Calu3 (cell line): ENCODE measurements at regions of chr5 and their contacts with region 1.

Region 1: GRCh38 chr5:117539692-117540091 is 965.1 kb upstream of the SEMA6A start:
- DNase-seq: no peak
- H3K4me3 Mint-ChIP-seq: peak overlapping the region; percentile 19
- H3K27ac Mint-ChIP-seq: peak overlapping the region; percentile 63
- H3K4me1 Mint-ChIP-seq: peaks cover 37% of the 10 kb centered on the region
- H3K27me3 Mint-ChIP-seq: no peaks in the 10 kb centered on the region
- CTCF ChIP-seq: no peak

Region 2: DNA sequence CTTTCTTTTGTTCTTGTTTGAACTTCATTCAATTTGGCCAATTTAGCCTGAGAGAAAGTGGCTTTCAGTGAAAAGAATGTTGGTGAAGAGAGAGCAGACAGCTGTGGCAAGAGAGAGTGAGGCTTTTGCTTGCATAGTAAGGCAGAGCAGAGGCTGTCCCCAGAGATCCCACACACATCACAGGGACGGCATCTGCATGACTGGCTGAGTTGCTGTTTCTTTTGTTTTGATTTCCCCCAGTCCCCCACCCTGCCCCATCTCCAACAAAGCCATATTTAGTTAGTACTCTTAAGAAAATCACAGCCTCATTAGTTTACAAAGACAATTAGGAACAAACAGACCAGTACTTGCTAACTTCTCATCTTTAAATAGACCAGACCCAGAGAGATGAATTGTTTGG is 601.2 kb before region 1 on chr5:
- CTCF ChIA-PET with region 1: no interaction called
- intact Hi-C with region 1: no loop called
- DNase-seq: no peak
- H3K4me3 Mint-ChIP-seq: no peak overlapping the region
- H3K27ac Mint-ChIP-seq: no peak overlapping the region
- H3K4me1 Mint-ChIP-seq: no peaks in the 10 kb centered on the region
- H3K27me3 Mint-ChIP-seq: no peaks in the 10 kb centered on the region
- CTCF ChIP-seq: no peak

Region 3: DNA sequence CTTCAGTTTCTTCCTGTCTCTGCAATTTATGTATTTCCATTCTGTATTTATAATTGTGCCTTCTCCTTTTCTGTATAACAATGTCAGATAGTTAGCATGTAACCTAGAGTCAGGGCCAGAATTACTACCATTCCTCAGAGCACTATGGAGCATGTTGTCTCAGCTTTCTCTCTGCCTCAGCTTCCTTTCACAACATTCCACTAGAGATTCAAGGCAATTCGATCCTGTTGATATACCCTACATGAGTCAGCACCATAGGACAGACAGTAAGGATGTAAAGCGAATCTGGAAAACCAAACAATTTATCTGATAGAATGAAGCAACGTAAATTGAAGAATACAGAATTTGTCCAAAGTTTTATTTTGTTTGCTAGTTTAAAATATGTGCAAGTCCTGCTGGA is 236.7 kb before region 1 on chr5:
- CTCF ChIA-PET with region 1: no interaction called
- intact Hi-C with region 1: no loop called
- DNase-seq: no peak
- H3K4me3 Mint-ChIP-seq: no peak overlapping the region
- H3K27ac Mint-ChIP-seq: no peak overlapping the region
- H3K4me1 Mint-ChIP-seq: no peaks in the 10 kb centered on the region
- H3K27me3 Mint-ChIP-seq: no peaks in the 10 kb centered on the region
- CTCF ChIP-seq: no peak

Region 4: GRCh38 chr5:117504305-117504704 is 35.4 kb before region 1 on chr5:
- CTCF ChIA-PET with region 1: no interaction called
- intact Hi-C with region 1: loop called (anchors 5 kb)
- DNase-seq: no peak
- H3K4me3 Mint-ChIP-seq: no peak overlapping the region
- H3K27ac Mint-ChIP-seq: no peak overlapping the region
- H3K4me1 Mint-ChIP-seq: no peaks in the 10 kb centered on the region
- H3K27me3 Mint-ChIP-seq: no peaks in the 10 kb centered on the region
- CTCF ChIP-seq: no peak

Region 5: DNA sequence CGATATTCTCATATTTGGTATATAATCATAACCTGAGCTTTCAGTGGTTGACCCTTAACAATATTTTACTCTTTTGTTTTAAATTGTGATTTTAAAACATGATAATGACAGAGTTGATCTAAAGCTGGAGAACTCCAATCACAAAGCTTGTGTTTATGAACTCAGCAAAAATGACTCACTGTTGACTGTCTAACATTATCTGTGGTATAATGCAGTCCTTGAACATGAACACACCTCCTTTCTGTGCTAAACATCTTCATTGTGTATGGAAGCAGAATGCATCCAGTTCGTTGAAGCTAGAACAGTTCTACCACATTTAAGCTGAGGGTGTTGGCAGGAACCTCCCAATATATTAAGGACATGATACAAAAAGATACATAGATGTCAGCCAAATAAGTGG is 65.2 kb after region 1 on chr5:
- CTCF ChIA-PET with region 1: no interaction called
- intact Hi-C with region 1: no loop called
- DNase-seq: no peak
- H3K4me3 Mint-ChIP-seq: no peak overlapping the region
- H3K27ac Mint-ChIP-seq: no peak overlapping the region
- H3K4me1 Mint-ChIP-seq: no peaks in the 10 kb centered on the region
- H3K27me3 Mint-ChIP-seq: no peaks in the 10 kb centered on the region
- CTCF ChIP-seq: no peak

Region 6: DNA sequence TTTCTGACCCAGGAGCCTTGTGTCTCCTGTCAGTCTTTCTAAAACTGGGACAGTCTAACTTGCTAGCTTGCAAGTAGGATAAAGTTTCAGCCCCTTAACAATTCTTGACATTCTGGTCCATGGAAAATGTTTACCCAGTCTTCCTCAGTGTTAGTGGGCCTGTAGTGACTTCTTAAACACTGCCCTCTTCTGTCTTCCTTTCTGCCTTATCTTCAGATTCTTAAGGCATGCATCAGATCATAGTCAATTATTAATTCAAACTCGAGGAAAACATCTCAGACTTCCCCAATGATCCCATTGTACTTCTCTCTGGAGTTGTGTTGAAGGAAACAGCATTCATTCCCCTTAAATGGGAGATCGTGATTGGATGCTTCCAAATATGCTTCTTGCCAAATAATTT is 248.9 kb after region 1 on chr5:
- CTCF ChIA-PET with region 1: no interaction called
- intact Hi-C with region 1: loop called (anchors 10 kb)
- DNase-seq: peak; percentile 35
- H3K4me3 Mint-ChIP-seq: no peak overlapping the region
- H3K27ac Mint-ChIP-seq: no peak overlapping the region
- H3K4me1 Mint-ChIP-seq: peaks cover 11% of the 10 kb centered on the region
- H3K27me3 Mint-ChIP-seq: no peaks in the 10 kb centered on the region
- CTCF ChIP-seq: no peak